Right ventricle myocardium inferior (tissue), 1 donor: ENCODE measurements at regions of chr4 and their contacts with region 1.

Region 1: DNA sequence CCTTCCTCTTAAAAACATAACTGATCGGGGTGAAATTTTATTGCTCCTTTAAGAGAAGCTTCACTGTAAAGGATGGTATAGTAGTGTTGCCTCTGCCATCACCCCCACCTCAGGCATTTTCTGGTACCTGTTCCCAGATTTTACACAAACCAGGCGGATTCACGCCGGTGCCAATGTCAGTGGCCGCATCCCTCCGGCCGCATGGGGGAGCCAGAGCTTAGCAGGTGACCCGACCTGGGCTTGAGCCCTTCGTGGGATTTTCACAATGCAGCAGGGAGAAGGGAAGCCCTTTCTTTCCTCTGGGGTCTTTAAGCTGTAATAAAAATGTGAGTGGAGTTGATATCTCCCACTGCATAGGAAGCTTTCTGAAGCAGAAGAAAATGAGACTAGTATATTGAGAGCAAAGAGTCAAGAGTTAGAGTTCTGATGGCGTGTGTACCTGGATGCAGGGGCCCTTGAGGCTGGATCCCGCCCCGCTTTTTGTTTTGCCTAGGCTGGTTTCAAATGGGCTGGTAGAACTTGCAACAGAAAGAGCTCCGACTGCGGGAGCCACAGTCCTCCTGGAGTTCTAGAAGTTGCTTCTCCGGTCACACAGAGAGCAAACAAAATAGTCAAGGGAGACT is 59.4 kb downstream of the POLR2B start:
- DNase-seq: peak; percentile 84
- ATAC-seq: peak; percentile 51

Region 2: DNA sequence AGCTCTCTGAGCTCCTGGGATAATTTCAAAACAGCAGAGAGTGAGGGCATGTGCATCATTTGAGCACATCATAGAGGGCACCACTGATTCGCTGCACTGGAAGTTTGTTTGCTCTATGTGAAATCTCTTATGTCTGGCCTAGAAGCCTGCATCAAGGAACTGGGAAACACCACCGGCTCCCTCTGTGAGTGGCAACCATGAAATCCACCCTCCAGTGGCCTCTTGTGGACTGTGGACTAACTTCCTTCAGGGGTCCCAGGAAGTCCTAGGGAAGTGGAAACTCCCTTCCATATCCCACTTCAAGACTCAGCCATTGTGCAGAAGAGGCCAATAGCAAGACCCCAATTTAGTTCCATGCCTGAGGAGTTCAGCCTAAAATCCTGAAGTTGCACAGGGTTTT is 120.1 kb after region 1 on chr4:
- intact Hi-C with region 1: loop called (anchors 2 kb)
- DNase-seq: no peak
- ATAC-seq: no peak

Region 3: DNA sequence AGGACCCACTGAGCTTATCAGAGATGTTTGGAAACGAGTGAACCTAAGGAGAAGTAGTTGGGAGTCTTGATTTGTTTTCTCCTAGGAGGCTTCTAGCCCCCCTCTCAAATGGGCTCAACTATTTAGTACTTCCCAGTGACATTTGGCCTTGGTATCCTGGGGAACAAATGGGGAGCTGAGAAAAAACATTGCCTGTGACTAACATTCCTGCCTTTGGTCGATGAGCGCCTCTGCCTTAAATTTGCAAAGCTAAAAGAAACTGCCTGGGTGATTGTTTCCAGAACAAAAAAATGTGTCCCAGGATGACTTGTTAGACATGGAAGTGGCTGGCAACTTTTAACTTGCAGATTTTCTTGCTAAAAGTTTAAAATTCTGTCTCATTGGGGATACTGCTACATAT is 130.9 kb after region 1 on chr4:
- intact Hi-C with region 1: no loop called
- DNase-seq: no peak
- ATAC-seq: no peak